Left ventricle myocardium inferior (tissue), 1 donor: ENCODE measurements at regions of chr5 and their contacts with region 1.

Region 1: GRCh38 chr5:15013654-15014463 is 142.3 kb upstream of the ANKH start:
- DNase-seq: no peak
- H3K4me3 ChIP-seq: no peak overlapping the region
- H3K27ac ChIP-seq: no peak overlapping the region
- H3K4me1 ChIP-seq: peaks cover 16% of the 10 kb centered on the region
- H3K27me3 ChIP-seq: no peaks in the 10 kb centered on the region
- CTCF ChIP-seq: peak; percentile 80

Region 2: GRCh38 chr5:14685757-14686156 is 328.1 kb before region 1 on chr5:
- intact Hi-C with region 1: loop called (anchors 10 kb)
- DNase-seq: no peak
- H3K4me3 ChIP-seq: no peak overlapping the region
- H3K27ac ChIP-seq: peak overlapping the region; percentile 88
- H3K4me1 ChIP-seq: peaks cover 66% of the 10 kb centered on the region
- H3K27me3 ChIP-seq: no peaks in the 10 kb centered on the region
- CTCF ChIP-seq: peak; percentile 70

Region 3: DNA sequence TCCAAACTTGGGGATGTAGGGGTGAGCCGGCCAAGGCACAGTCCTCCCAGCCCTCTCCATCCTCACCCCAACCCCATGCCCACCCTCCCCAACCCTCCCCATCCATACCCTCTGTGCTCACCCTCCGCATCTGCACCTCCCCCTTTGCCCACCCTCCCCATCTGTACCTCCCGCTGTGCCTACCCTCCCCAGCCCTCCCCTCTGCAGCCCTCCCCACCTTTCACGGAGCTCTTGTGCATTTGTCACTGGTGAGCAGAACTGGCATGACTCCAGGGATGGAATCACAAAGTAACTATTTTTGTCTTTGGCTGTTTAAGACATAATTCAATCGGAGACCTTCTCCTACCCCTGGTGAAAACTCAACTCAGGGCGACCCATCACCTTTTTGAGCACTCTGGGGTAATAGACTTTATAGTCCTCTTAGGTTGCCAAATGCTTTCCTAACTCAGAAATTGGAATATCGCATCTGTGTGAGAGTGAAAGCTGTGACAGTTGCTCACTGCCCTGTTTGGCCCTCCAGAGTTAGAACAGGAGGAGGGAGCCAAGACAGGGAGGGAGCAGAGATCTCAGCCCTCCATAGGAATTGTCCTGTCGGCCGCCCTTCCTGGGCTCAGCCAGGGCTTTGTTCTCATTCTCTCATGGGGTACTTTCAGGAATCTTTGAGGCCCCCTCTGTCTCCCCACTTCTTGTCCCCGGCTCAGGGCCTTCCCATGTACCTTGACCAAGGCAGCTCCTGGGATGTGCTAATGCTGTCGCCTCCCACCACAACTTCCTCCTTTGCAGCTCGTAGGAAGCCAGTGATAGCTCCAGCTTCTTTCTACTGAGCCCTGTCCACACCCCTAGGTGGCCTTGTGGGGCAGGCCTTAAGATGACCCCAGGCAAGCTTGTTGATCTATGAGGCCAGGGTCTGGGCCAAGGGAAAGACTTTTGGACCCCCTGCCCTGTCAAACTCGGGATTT is 313.1 kb before region 1 on chr5:
- intact Hi-C with region 1: no loop called
- DNase-seq: no peak
- H3K4me3 ChIP-seq: no peak overlapping the region
- H3K27ac ChIP-seq: peak overlapping the region; percentile 68
- H3K4me1 ChIP-seq: peaks cover 56% of the 10 kb centered on the region
- H3K27me3 ChIP-seq: no peaks in the 10 kb centered on the region
- CTCF ChIP-seq: no peak